MCF 10A (cell line): ENCODE measurements at regions of chr13 and their contacts with region 1.

Region 1: DNA sequence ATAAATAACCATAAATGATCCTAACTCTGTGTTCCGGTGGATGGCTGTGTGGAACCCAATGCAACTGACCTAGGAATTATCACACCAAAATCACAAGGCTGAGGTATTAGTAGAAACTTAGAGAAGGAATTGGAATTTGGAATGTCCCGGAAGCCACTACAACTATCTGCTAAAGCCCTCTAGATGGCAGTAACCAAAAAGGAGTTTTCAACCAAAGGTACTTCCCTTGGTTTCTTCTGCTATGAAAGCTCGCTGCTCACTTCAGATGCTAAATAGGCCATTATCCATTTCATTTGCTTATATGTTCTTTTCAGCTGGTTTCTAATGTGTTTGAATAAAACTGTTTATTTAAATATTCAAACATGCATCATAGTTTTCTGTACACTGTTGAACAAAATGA is 1589.1 kb upstream of the SPRY2 start:
- DNase-seq: peak; percentile 55
- H3K4me3 Mint-ChIP-seq: no peak overlapping the region
- H3K27ac Mint-ChIP-seq: no peak overlapping the region
- H3K4me1 Mint-ChIP-seq: no peaks in the 10 kb centered on the region
- H3K27me3 Mint-ChIP-seq: no peaks in the 10 kb centered on the region
- CTCF ChIP-seq: peak; percentile 43

Region 2: DNA sequence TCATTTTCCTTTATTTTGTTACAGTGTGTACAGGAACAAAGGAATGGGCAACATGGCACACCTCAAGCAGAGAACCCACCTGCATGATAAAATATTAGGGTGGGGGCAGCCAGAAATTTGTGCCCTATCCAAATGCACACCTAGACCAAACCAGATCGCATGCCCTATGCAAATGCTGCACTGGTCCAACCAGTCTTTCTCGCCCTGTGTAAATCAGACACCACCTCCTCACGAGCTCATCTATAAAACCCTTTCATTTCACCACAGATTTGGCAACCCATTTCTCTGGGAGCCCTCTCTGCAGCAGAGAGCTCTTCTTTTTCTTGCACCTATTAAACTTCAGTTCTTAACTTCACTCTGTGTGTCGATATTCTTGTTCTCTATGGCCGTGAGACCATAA is 393.1 kb after region 1 on chr13:
- CTCF ChIA-PET with region 1: no interaction called
- POLR2A ChIA-PET with region 1: no interaction called
- intact Hi-C with region 1: loop called (anchors 10 kb)
- DNase-seq: no peak
- H3K4me3 Mint-ChIP-seq: no peak overlapping the region
- H3K27ac Mint-ChIP-seq: no peak overlapping the region
- H3K4me1 Mint-ChIP-seq: no peaks in the 10 kb centered on the region
- H3K27me3 Mint-ChIP-seq: no peaks in the 10 kb centered on the region
- CTCF ChIP-seq: no peak

Region 3: GRCh38 chr13:83065108-83065507 is 1135.1 kb after region 1 on chr13:
- CTCF ChIA-PET with region 1: no interaction called
- POLR2A ChIA-PET with region 1: no interaction called
- intact Hi-C with region 1: no loop called
- DNase-seq: peak; percentile 61
- H3K4me3 Mint-ChIP-seq: no peak overlapping the region
- H3K27ac Mint-ChIP-seq: peak overlapping the region; percentile 25
- H3K4me1 Mint-ChIP-seq: peaks cover 34% of the 10 kb centered on the region
- H3K27me3 Mint-ChIP-seq: no peaks in the 10 kb centered on the region
- CTCF ChIP-seq: no peak